Activated CD4-positive, alpha-beta T cell treated with anti-CD3 and anti-CD28 coated beads for 36 hours (primary cell): ENCODE measurements at regions of chr6 and their contacts with region 1.

Region 1: DNA sequence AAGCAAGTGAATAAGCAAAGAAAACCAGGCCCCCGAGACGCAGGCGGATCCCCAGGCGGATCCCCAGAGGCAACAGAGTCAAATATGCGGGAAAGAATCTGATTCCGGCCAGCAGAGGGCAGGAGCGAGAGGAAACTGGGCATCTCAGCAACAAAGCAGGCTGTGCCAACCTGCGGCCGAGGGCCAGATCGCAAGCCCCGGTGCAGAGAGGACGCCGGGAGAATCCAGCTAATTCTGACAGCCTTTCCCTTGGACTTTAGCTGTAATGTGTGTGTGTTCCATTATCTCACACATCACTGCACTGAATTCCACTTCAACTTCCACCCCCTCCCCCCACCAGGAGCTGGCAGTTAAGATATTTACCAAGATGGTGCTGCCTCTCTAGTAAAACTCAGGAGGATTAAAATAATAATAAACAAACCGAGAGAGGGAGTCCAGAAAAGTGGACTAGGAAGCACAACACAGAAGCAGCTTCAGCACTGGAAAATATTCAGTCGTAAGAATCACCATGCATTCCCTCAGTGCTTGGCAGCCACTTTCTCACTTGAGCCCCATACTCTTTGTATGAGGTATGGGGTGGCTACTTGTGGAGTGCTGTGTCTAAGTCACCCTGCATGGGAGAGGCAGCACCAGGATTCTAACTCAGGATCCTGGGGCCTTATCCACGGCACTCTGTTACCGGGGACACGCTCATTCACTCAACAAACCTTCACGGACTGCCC is 66.2 kb upstream of the SNX9 start:
- DNase-seq: peak; percentile 91
- ATAC-seq: peak; percentile 23
- H3K4me3 Mint-ChIP-seq: peak overlapping the region; percentile 48
- H3K27ac Mint-ChIP-seq: peak overlapping the region; percentile 87
- H3K4me1 Mint-ChIP-seq: peaks cover 94% of the 10 kb centered on the region
- H3K27me3 Mint-ChIP-seq: peaks cover 5% of the 10 kb centered on the region

Region 2: DNA sequence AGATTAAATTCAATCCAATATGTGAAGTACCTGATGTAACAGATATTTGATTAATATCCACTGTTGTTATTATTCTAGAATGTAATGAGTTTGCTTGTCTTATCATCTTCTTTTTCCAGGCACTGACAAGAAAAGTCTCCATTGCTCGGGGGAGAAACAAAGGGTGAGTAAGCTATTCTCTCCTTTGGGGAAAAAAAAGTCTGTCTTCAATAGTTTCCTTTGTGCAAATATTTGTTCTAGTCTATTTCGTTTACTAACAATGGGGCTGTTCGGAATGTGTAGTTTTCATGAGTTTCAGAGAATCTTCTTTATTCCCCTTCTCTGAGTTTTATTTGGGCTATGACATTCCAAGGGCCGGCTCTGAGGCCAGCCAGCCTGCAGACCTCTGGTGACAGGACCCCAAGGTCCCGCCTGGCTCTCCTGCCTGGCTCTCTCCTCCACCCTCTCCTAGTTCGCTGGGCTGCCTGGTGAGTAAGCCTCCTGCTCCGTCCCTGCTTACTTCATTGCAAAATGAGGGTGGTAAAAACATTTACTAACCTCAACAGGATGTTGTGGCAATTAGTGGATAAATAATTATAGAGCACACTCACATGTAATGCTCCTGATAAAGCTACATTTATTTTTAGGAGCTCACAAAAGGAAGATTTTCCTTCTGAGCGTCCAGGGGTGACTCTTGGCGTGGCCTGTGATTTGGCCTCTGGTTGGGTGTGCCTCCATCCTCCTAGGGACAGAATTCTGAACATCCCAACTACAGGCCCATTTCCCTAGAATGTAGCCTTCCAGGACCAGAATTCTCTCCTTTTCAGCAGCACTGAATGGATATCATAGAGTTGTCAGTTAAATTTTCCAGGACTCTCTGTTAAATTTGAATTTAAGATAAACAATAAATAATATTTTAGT is 23.1 kb after region 1 on chr6:
- CTCF ChIA-PET with region 1: no interaction called
- POLR2A ChIA-PET with region 1: no interaction called
- intact Hi-C with region 1: no loop called
- DNase-seq: no peak
- ATAC-seq: no peak
- H3K4me3 Mint-ChIP-seq: no peak overlapping the region
- H3K27ac Mint-ChIP-seq: no peak overlapping the region
- H3K4me1 Mint-ChIP-seq: peaks cover 2% of the 10 kb centered on the region
- H3K27me3 Mint-ChIP-seq: peaks cover 3% of the 10 kb centered on the region

Region 3: GRCh38 chr6:157800420-157801237 is 43.8 kb after region 1 on chr6:
- CTCF ChIA-PET with region 1: interaction called, 20 read pairs
- POLR2A ChIA-PET with region 1: interaction called, 5 read pairs
- intact Hi-C with region 1: no loop called
- DNase-seq: peak; percentile 70
- ATAC-seq: peak; percentile 89
- H3K4me3 Mint-ChIP-seq: peak overlapping the region; percentile 41
- H3K27ac Mint-ChIP-seq: peak overlapping the region; percentile 72
- H3K4me1 Mint-ChIP-seq: peaks cover 62% of the 10 kb centered on the region
- H3K27me3 Mint-ChIP-seq: peaks cover 5% of the 10 kb centered on the region

Region 4: DNA sequence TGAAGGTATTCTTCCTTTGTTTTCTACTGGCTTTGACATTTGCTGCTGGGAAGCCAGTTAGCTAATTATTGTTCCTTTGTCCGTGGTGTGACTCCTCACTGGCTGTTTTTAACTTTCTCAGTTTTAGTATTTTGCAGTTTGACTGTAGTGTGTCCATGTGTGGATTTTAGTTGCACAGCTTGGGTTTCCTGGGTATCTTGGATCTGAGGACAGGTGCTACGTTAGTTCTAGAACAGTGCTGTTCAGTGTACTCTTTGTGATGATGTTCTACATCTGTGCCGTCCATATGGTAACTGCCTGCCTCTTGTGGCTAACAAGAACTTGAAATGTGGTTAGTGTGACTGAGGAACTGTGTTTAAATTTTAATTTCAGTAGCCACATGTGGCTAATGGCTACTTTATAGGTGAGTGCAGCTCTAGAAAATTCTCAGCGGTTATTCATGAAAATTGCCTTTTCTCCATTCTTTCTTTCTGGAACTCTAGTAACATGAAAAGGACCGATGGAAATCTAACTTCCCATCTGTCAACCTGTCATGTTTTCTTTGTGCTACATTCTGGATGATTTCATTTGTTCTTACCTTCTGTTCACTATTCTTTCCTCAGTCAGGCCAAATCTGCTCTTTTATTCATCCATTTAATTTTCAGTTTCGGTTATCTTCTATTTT is 73.6 kb after region 1 on chr6:
- CTCF ChIA-PET with region 1: interaction called, 13 read pairs
- POLR2A ChIA-PET with region 1: interaction called, 5 read pairs
- intact Hi-C with region 1: no loop called
- DNase-seq: no peak
- ATAC-seq: peak; percentile 48
- H3K4me3 Mint-ChIP-seq: peak overlapping the region; percentile 37
- H3K27ac Mint-ChIP-seq: peak overlapping the region; percentile 75
- H3K4me1 Mint-ChIP-seq: peaks cover 76% of the 10 kb centered on the region
- H3K27me3 Mint-ChIP-seq: no peaks in the 10 kb centered on the region

Region 5: DNA sequence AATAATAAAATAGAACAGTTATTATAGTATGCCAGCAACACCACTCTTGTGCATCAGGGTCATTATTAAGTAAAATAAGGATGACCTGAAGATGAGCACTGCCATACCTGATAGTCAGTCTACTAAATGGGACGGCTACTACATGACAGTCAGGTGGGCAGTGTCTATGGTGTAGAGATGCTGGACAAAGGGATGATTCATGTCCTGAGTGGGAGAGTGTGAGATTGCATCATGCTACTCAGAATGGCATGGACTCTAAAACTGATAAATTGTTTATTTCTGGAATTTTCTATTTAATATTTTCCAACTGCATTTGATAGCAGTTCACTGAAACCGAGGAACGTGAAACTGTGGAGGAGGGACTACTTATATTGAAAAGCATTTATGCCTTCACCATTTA is 104.9 kb after region 1 on chr6:
- CTCF ChIA-PET with region 1: interaction called, 16 read pairs
- POLR2A ChIA-PET with region 1: no interaction called
- intact Hi-C with region 1: loop called (anchors 1 to 5 kb)
- DNase-seq: no peak
- ATAC-seq: no peak
- H3K4me3 Mint-ChIP-seq: no peak overlapping the region
- H3K27ac Mint-ChIP-seq: no peak overlapping the region
- H3K4me1 Mint-ChIP-seq: peaks cover 74% of the 10 kb centered on the region
- H3K27me3 Mint-ChIP-seq: no peaks in the 10 kb centered on the region

Region 6: DNA sequence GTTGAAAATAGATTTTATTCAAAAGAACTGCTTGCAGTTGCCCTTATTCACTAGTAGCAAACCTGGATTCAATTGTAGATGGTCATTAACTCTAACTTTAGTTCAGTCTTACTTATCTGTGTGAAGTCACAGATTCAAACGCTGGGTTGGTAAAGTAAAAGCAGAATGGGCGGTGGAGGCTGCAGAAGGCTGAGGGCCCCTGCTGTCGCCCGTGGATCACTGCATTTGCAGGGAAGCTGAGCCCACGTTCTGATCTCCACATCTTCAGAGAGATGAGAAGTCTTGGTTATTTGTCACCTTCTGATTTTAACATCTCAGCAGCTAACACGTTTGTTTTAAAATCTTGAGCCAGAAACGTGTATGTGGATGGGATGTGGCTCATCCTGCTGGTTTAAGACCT is 141.3 kb after region 1 on chr6:
- CTCF ChIA-PET with region 1: interaction called, 13 read pairs
- POLR2A ChIA-PET with region 1: no interaction called
- intact Hi-C with region 1: no loop called
- DNase-seq: peak; percentile 59
- ATAC-seq: peak; percentile 82
- H3K4me3 Mint-ChIP-seq: no peak overlapping the region
- H3K27ac Mint-ChIP-seq: no peak overlapping the region
- H3K4me1 Mint-ChIP-seq: peaks cover 14% of the 10 kb centered on the region
- H3K27me3 Mint-ChIP-seq: no peaks in the 10 kb centered on the region